Transverse colon (tissue), 4 donors: ENCODE measurements at regions of chr17 and their contacts with region 1.

Region 1: DNA sequence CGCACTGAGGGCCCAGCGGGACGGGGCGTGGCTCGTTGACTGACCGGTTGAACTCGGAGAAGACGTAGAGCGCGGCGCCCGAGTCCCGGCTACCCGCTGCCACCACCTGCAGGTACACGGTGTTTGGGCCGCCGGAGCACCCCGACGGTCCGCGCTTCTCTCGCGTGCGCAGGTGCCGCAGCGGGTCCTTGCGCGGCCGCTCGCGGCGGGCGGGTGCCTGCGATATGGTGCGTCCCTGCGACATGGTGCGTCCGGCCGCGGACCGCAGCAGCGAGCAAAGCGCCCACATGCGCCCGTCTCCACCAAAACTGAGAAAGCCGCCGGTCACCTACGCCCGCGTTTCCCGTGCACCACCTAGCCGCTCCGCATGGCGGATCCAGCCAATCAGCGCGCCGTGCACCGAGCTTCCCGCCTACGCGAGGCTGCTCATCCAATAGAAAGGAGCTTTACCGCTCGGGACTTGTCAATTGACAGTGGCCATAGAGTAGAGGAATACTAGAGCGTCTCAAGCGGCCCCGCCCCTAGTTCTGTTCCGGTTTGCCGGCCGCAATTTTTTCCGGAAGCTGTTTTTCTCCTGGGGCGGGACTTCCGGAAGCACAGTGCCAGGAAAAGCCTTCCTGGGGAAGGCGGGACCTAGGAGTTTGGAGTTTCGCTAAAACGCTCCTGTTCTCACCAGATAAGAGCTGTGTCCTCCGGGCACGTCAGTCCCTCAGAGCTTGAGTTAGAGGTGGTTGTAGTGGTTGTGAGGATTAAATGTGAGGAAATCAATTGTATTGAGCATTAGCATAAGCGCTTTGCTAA is at the start of gene ELAC2:
- DNase-seq: peak; percentile 97
- H3K4me3 ChIP-seq: peak within 1 kb of the TSS; percentile 74 to 89 (median 86)
- H3K27ac ChIP-seq: peak within 1 kb of the TSS; percentile 85 to 97 (median 91)
- H3K4me1 ChIP-seq: peaks cover 4 to 16% (median 13%) of the 10 kb centered on the region in 4 donors
- H3K27me3 ChIP-seq: no peaks in the 10 kb centered on the region
- CTCF ChIP-seq: peak in 3 of 5 experiments; percentile 11 to 37 (median 12)
- EP300 ChIP-seq: no peak
- POLR2A ChIP-seq: peak; percentile 74
- total RNA-seq, gene ELAC2: 56.2 to 143 (median 66.0) TPM

Region 2: GRCh38 chr17:11997147-11997846 is 1020.6 kb before region 1 on chr17 and contains the start of gene ZNF18:
- in situ Hi-C with region 1: loop called in 1 of 4 experiments (anchors 25 kb)
- intact Hi-C with region 1: loop called (anchors 10 kb)
- DNase-seq: peak; percentile 98
- H3K4me3 ChIP-seq: peak within 1 kb of the TSS; percentile 51 to 87 (median 83)
- H3K27ac ChIP-seq: peak within 1 kb of the TSS; percentile 90 to 98 (median 96)
- H3K4me1 ChIP-seq: peaks cover 4 to 14% (median 11%) of the 10 kb centered on the region in 4 donors
- H3K27me3 ChIP-seq: no peaks in the 10 kb centered on the region
- CTCF ChIP-seq: no peak
- EP300 ChIP-seq: no peak
- POLR2A ChIP-seq: peak; percentile 95
- total RNA-seq, gene ZNF18: 2.2 to 15.5 (median 7.9) TPM

Region 3: DNA sequence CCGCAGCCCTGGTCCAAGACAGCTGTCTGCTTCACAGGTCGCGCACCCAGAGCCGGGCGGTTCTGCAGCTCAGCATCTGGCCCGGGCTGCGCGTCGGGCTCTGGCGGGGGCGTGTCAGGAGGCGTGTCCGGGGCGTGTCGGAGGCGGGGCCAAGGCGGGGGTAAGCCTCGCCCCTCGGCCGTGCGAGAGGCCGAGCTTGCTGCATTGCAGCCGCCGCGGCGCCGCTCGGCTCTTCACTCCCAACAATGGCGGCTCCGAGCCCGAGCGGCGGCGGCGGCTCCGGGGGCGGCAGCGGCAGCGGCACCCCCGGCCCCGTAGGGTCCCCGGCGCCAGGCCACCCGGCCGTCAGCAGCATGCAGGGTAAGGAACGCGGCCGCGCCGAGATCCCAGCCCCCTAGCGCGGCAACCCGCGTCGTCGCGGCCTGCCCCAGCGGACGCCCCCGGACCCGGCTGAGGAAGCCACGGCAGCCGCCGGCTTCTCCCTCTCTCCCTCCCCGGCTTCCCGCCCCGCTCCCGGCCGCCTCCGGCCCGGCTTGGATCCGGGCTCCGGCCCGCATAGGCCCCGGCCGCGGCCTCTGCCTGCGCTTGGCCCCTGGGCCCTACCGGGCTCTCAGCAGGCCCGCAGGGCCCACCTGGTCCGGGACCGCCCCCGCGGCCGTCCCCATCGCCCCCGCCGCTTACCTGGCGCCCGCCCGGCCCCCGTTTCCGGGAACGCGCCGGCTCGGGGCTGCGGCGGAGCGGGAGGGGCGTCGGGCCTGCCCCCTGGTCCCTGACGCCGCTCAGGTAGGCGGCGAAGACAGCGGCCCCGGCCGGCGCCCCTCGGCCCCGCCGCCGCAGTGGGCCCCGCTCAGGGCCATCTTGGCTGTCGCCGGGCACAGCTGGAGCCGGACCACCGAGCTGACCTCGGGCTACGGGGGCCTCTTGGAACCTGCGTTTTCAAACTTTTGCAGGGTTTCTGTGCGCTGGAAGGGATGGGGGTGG is 996.9 kb before region 1 on chr17 and contains the start of gene MAP2K4:
- in situ Hi-C with region 1: loop called in 1 of 4 experiments (anchors 25 kb)
- intact Hi-C with region 1: no loop called
- DNase-seq: peak; percentile 95
- H3K4me3 ChIP-seq: peak within 1 kb of the TSS; percentile 93 to 99 (median 98)
- H3K27ac ChIP-seq: peak within 1 kb of the TSS; percentile 89 to 97 (median 93)
- H3K4me1 ChIP-seq: peaks cover 5 to 41% (median 19%) of the 10 kb centered on the region in 4 donors
- H3K27me3 ChIP-seq: no peaks in the 10 kb centered on the region
- CTCF ChIP-seq: no peak
- EP300 ChIP-seq: no peak
- POLR2A ChIP-seq: peak; percentile 62
- total RNA-seq, gene MAP2K4: 6.2 to 24.0 (median 17.8) TPM

Region 4: GRCh38 chr17:12180644-12181261 is 837.1 kb before region 1 on chr17:
- in situ Hi-C with region 1: loop called in 2 of 4 experiments (anchors 25 kb)
- intact Hi-C with region 1: no loop called
- DNase-seq: peak; percentile 11
- H3K4me3 ChIP-seq: no peak overlapping the region
- H3K27ac ChIP-seq: peak overlapping the region in 3 of 4 donors; percentile 9 to 49 (median 39)
- H3K4me1 ChIP-seq: no peaks in the 10 kb centered on the region
- H3K27me3 ChIP-seq: no peaks in the 10 kb centered on the region
- CTCF ChIP-seq: peak; percentile 62 to 73 (median 66)
- EP300 ChIP-seq: no peak
- POLR2A ChIP-seq: no peak

Region 5: DNA sequence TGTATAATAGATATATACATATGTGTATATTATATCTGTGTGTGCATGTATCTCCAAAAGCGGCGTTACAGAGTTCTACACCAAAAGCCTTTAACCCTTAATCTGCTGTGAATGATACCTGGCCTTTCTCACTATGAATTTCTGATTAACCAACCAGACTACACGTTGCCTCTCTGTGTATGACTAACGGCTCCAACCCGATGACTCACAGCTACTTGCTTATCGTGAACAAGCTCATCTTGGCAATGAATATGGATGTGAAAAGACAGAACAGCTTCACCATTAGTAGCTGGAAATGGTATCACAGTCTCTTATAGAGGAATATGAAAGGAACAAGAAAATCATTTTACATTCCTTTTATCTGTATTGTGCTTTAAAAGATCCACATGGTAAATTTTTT is 252.3 kb before region 1 on chr17:
- in situ Hi-C with region 1: loop called in 1 of 4 experiments (anchors 25 kb)
- intact Hi-C with region 1: no loop called
- DNase-seq: no peak
- H3K4me3 ChIP-seq: no peak overlapping the region
- H3K27ac ChIP-seq: no peak overlapping the region
- H3K4me1 ChIP-seq: no peaks in the 10 kb centered on the region
- H3K27me3 ChIP-seq: no peaks in the 10 kb centered on the region
- CTCF ChIP-seq: no peak
- EP300 ChIP-seq: no peak
- POLR2A ChIP-seq: no peak